Heart left ventricle (tissue), 16 donors: ENCODE measurements at regions of chr5 and their contacts with region 1.

Region 1: GRCh38 chr5:64147849-64148441 is 17.7 kb upstream of the RNF180 start:
- DNase-seq: peak; percentile 49 to 66 (median 55)
- ATAC-seq: peak; percentile 46 to 70 (median 60)
- H3K4me3 ChIP-seq: no peak overlapping the region
- H3K27ac ChIP-seq: no peak overlapping the region
- H3K4me1 ChIP-seq: peaks cover 0 to 24% (median 9%) of the 10 kb centered on the region in 12 donors
- H3K27me3 ChIP-seq: no peaks in the 10 kb centered on the region
- CTCF ChIP-seq: peak; percentile 56 to 87 (median 73)
- POLR2A ChIP-seq: no peak

Region 2: GRCh38 chr5:64207978-64208377 is 60.0 kb after region 1 on chr5:
- intact Hi-C with region 1: loop called (anchors 1 to 5 kb)
- DNase-seq: no peak
- ATAC-seq: no peak
- H3K4me3 ChIP-seq: no peak overlapping the region
- H3K27ac ChIP-seq: no peak overlapping the region
- H3K4me1 ChIP-seq: peaks cover 0 to 11% (median 0%) of the 10 kb centered on the region in 12 donors
- H3K27me3 ChIP-seq: no peaks in the 10 kb centered on the region
- CTCF ChIP-seq: peak in 11 of 12 donors; percentile 10 to 63 (median 33)
- POLR2A ChIP-seq: no peak

Region 3: DNA sequence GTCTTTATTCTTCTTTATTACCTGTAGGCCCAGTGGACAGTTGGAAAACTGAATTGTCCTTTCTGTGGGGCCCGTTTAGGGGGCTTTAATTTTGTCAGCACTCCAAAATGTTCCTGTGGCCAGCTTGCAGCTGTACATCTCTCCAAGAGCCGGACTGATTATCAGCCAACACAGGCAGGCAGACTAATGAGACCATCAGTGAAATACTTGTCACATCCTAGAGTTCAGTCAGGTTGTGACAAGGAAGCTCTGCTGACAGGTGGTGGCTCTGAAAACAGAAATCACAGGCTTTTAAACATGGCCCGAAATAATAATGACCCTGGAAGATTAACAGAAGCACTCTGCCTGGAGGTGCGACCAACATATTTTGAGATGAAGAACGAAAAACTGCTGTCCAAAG is 65.6 kb after region 1 on chr5:
- intact Hi-C with region 1: loop called in 6 of 10 experiments (anchors 2 to 5 kb)
- DNase-seq: no peak
- ATAC-seq: no peak
- H3K4me3 ChIP-seq: no peak overlapping the region
- H3K27ac ChIP-seq: no peak overlapping the region
- H3K4me1 ChIP-seq: peaks cover 0 to 20% (median 0%) of the 10 kb centered on the region in 12 donors
- H3K27me3 ChIP-seq: no peaks in the 10 kb centered on the region
- CTCF ChIP-seq: no peak
- POLR2A ChIP-seq: no peak

Region 4: DNA sequence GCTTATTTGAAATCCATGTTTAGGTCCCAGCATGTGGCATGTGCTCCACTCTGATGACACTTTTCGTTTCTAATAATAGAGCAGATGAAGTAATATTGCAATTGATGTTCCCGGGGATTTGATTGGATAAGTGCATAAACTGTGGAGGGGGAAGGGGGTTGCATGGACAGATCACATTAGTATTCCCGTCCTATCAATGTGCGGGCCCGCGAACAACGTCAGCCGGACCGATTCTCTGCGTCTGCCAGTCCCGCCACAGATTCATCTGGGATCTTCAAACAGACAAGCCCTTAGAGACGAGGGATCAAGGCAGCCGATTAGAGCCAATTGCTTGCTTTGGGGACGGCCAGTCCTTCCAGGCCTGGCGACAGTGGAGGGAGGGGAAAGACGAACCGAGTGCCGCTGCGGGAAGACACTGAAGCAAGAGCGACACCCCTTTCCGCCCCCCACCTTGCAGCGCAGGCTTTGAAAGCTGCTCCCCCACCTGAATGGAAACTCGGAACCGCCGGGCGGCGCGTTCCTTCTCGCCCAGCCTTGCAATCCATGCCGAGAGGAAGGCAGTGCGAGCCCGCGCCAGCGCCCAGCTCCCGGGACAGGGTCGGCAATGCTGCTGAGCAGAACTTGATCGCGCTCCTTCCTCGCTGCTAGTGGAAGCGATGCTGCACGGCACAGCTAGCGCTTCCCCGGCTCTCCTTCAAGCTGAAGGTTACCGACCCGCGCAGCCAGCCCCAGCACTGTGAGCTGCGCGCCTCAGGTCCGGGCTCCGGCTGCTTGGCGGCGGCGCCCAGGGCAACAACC is 358.0 kb after region 1 on chr5 and contains the start of gene RGS7BP:
- intact Hi-C with region 1: loop called in 2 of 10 experiments (anchors 10 kb)
- DNase-seq: peak; percentile 31 to 73 (median 48)
- ATAC-seq: peak; percentile 61 to 95 (median 88)
- H3K4me3 ChIP-seq: peak within 1 kb of the TSS; percentile 31 to 79 (median 58)
- H3K27ac ChIP-seq: peak within 1 kb of the TSS in 7 of 12 donors; percentile 8 to 65 (median 41)
- H3K4me1 ChIP-seq: peaks cover 0 to 25% (median 4%) of the 10 kb centered on the region in 12 donors
- H3K27me3 ChIP-seq: peaks cover 0 to 24% (median 0%) of the 10 kb centered on the region in 9 donors
- CTCF ChIP-seq: peak in 5 of 12 donors; percentile 12 to 52 (median 41)
- POLR2A ChIP-seq: no peak
- total RNA-seq, gene RGS7BP: 0.69 to 5.2 (median 2.1) TPM

Region 5: DNA sequence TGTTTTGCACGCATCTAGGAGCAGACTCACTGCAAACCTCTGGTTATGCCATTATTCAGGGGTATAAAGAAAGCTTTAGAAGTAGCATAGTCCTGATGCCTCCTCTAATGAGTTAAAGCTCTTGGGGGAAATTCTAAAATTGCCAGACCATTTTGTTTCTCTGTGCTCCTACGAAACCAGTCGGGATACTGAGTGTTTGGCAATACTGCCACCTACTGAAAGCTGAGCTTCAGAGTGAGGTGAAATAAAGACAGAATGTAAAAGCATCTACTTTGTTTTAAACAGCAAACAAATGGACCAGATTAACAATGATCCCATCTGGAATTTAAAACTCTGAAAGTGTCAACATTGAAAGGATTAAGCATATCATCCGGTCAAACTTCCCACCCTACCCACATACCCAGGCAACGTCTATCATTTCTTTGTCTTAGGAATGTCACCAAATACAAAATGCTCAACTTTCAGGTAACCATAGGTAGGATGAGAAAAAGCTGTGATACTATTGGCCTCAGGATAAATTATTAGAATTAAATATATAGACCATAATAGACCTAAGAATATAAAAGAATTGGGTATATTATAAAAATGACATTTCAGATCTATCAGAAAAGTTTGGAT is 464.5 kb after region 1 on chr5:
- intact Hi-C with region 1: loop called (anchors 1 to 5 kb)
- DNase-seq: peak in 3 of 5 donors; percentile 28 to 40 (median 32)
- ATAC-seq: peak in 3 of 4 donors; percentile 60 to 68 (median 68)
- H3K4me3 ChIP-seq: no peak overlapping the region
- H3K27ac ChIP-seq: no peak overlapping the region
- H3K4me1 ChIP-seq: peaks cover 0 to 5% (median 0%) of the 10 kb centered on the region in 12 donors
- H3K27me3 ChIP-seq: no peaks in the 10 kb centered on the region
- CTCF ChIP-seq: peak; percentile 43 to 82 (median 73)
- POLR2A ChIP-seq: no peak

Region 6: GRCh38 chr5:64768358-64769312 is 620.7 kb after region 1 on chr5 and contains the starts of genes CWC27 and SREK1IP1:
- intact Hi-C with region 1: loop called in 1 of 10 experiments (anchors 5 kb)
- DNase-seq: peak; percentile 80 to 90 (median 86)
- ATAC-seq: peak; percentile 98 to 99 (median 99)
- H3K4me3 ChIP-seq: peak within 1 kb of the TSS; percentile 72 to 95 (median 86)
- H3K27ac ChIP-seq: peak within 1 kb of the TSS; percentile 79 to 96 (median 89)
- H3K4me1 ChIP-seq: peaks cover 9 to 51% (median 40%) of the 10 kb centered on the region in 12 donors
- H3K27me3 ChIP-seq: no peaks in the 10 kb centered on the region
- CTCF ChIP-seq: peak in 4 of 12 donors; percentile 7 to 31 (median 22)
- POLR2A ChIP-seq: peak in 1 of 2 donors; percentile 34
- total RNA-seq, gene CWC27: 10.7 to 29.8 (median 23.5) TPM
- total RNA-seq, gene SREK1IP1: 4.1 to 20.7 (median 11.1) TPM

Region 7: DNA sequence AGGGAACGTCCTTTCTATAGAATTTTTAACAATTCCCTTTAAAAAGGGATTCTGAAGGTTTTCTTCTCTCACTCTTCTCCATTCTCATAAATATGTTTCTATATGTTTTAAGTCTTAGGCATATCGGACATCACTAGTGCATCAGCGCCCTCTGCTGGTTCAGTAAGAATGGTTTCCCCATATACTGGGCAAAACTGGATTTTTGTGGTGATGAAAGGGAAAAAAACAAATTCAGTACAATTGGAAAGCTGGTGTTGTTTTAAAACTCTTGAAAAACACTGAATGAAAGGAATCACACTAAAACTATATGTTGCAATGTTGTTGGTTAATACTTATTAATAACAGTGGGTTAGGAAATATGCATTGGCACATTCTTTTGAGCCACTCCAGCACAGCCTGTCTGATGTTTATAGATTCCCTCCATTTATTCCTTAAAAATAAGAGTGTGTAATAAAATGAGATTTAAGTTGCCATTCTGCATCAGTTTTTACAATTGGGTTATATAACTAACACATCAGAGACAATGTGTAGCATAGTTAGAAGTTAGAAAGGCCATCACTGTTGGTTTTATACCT is 636.6 kb after region 1 on chr5:
- intact Hi-C with region 1: loop called in 1 of 10 experiments (anchors 5 kb)
- DNase-seq: peak in 4 of 5 donors; percentile 50 to 73 (median 58)
- ATAC-seq: peak in 2 of 4 donors; percentile 60 to 67
- H3K4me3 ChIP-seq: no peak overlapping the region
- H3K27ac ChIP-seq: no peak overlapping the region
- H3K4me1 ChIP-seq: no peaks in the 10 kb centered on the region
- H3K27me3 ChIP-seq: no peaks in the 10 kb centered on the region
- CTCF ChIP-seq: peak; percentile 70 to 94 (median 86)
- POLR2A ChIP-seq: no peak